ENCODE measurements at regions of chr9 and their contacts with region 1.

Region 1: GRCh38 chr9:97890038-97890437 is 32.3 kb downstream of the TRMO start:
- DNase-seq: peak in 2 of 3 donors; percentile 38 to 49
- H3K4me3 ChIP-seq: no peak overlapping the region
- H3K27ac ChIP-seq: no peak overlapping the region
- H3K4me1 ChIP-seq: no peaks in the 10 kb centered on the region
- H3K27me3 ChIP-seq: no peaks in the 10 kb centered on the region

Region 2: GRCh38 chr9:97529363-97530076 is 360.5 kb before region 1 on chr9:
- CTCF ChIA-PET with region 1: no interaction called
- POLR2A ChIA-PET with region 1: no interaction called
- DNase-seq: peak in 1 of 3 donors; percentile 15
- H3K4me3 ChIP-seq: no peak overlapping the region
- H3K27ac ChIP-seq: no peak overlapping the region
- H3K4me1 ChIP-seq: no peaks in the 10 kb centered on the region
- H3K27me3 ChIP-seq: no peaks in the 10 kb centered on the region

Region 3: GRCh38 chr9:97900738-97901565 is 10.9 kb after region 1 on chr9:
- CTCF ChIA-PET with region 1: interaction called, 65 read pairs
- POLR2A ChIA-PET with region 1: interaction called, 3 read pairs
- DNase-seq: peak in 2 of 3 donors; percentile 56 to 66
- H3K4me3 ChIP-seq: no peak overlapping the region
- H3K27ac ChIP-seq: no peak overlapping the region
- H3K4me1 ChIP-seq: peaks cover 10 to 15% (median 14%) of the 10 kb centered on the region in 4 experiments
- H3K27me3 ChIP-seq: no peaks in the 10 kb centered on the region